Ascending aorta (tissue), 2 donors: ENCODE measurements at regions of chr5 and their contacts with region 1.

Region 1: DNA sequence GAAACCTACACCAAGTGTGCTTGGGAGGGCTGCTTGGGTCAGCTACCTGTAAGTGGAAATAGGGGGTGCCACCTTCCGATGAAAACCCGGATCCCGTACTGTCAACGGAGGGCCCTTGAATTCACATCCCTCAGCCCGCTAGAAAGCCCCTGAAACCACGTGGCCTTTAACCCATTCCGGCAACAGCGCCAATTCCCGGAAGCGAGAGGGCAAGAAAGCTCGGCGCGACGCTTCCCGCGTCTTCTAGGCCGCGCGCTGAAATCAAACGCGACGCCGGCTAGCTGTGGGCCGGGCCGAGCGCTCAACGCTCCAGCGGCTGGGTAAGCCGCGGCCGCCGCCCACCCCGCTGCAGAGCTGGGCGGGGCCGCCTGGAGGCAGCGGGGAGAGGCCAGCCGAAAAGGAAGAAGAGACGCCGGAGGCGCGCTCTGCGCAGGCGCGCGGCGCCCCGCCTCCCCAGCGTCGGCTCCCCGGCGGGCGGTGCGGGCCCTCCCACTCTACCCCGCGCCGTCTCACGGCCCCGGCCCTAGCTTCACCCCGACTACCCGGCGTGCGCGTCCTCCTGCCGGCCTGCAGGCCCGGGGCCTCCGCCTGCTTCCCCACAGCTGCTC is at the start of gene KIF2A:
- DNase-seq: peak; percentile 63 to 95
- H3K4me3 ChIP-seq: peak within 1 kb of the TSS; percentile 93 to 98
- H3K27ac ChIP-seq: peak within 1 kb of the TSS; percentile 79 to 94
- H3K4me1 ChIP-seq: peaks cover 3 to 4% of the 10 kb centered on the region in 2 donors
- H3K27me3 ChIP-seq: no peaks in the 10 kb centered on the region
- CTCF ChIP-seq: no peak
- total RNA-seq, gene KIF2A: 19.8 TPM

Region 2: GRCh38 chr5:62354028-62354874 is 48.4 kb after region 1 on chr5:
- intact Hi-C with region 1: loop called (anchors 5 kb)
- DNase-seq: no peak
- H3K4me3 ChIP-seq: no peak overlapping the region
- H3K27ac ChIP-seq: no peak overlapping the region
- H3K4me1 ChIP-seq: no peaks in the 10 kb centered on the region
- H3K27me3 ChIP-seq: no peaks in the 10 kb centered on the region
- CTCF ChIP-seq: peak; percentile 40 to 69 (median 48)

Region 3: DNA sequence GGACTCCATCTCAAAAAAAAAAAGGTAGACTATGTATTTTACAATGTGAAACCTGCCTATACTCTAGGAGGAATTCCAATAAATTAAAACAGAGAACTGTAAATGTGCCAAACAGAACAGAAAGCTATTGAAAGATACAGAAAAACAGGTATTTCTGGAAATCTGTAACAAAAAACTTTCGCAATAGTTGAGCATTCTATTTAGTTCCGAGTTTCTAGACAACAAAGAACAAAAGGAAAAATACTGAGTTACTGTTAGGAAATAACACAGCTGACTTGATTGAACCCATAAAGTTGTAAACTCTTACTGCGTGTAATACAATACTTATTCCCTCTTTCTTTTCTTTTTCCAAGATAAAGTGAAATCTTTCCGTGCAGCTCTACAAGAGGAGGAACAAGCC is 79.3 kb after region 1 on chr5:
- intact Hi-C with region 1: no loop called
- DNase-seq: no peak
- H3K4me3 ChIP-seq: no peak overlapping the region
- H3K27ac ChIP-seq: no peak overlapping the region
- H3K4me1 ChIP-seq: no peaks in the 10 kb centered on the region
- H3K27me3 ChIP-seq: no peaks in the 10 kb centered on the region
- CTCF ChIP-seq: no peak

Region 4: DNA sequence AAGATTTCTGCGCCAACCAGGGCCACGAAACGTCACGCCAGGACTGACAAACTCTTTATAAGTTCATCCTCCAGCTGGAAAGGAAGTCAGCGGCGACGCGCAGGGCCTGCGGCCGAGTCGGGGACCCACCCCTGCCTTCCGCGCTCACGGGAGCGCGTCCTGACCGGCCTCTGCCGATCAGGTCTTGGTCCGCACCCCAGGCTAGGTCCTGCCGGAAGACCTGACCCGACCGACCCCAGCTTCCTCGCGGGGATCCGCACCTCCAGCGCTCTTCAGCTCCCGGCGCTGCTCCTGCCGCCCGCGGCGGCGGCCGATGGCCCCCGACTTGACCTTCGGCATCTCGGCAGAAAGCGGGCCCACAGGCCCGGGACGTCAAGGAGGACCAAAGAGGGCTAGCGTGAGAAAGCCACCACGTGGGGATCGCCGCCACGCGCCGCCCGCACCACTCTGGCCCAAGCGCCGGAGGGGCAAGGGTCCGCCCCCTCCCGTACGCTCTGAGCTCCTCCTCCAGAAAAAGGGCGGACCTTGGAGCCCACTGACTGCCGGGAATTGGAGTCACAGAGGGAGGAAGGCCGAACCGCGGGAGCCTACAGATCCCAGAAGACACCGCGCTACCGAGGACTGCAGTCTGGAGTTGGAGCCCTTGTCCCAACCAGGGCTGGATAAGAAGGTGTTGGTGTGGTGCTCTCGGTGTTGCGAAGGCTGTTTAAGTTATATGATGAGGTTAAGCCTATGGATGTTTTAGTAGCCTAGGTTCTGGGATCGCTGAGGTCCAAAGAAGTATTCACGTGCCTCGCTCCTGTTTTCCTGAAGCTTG is 97.8 kb after region 1 on chr5 and contains the start of gene DIMT1:
- intact Hi-C with region 1: loop called (anchors 1 kb)
- DNase-seq: peak; percentile 92 to 98
- H3K4me3 ChIP-seq: peak within 1 kb of the TSS; percentile 87 to 100
- H3K27ac ChIP-seq: peak within 1 kb of the TSS; percentile 96 to 98
- H3K4me1 ChIP-seq: peaks cover 4 to 13% of the 10 kb centered on the region in 2 donors
- H3K27me3 ChIP-seq: no peaks in the 10 kb centered on the region
- CTCF ChIP-seq: no peak
- total RNA-seq, gene DIMT1: 8.6 TPM

Region 5: DNA sequence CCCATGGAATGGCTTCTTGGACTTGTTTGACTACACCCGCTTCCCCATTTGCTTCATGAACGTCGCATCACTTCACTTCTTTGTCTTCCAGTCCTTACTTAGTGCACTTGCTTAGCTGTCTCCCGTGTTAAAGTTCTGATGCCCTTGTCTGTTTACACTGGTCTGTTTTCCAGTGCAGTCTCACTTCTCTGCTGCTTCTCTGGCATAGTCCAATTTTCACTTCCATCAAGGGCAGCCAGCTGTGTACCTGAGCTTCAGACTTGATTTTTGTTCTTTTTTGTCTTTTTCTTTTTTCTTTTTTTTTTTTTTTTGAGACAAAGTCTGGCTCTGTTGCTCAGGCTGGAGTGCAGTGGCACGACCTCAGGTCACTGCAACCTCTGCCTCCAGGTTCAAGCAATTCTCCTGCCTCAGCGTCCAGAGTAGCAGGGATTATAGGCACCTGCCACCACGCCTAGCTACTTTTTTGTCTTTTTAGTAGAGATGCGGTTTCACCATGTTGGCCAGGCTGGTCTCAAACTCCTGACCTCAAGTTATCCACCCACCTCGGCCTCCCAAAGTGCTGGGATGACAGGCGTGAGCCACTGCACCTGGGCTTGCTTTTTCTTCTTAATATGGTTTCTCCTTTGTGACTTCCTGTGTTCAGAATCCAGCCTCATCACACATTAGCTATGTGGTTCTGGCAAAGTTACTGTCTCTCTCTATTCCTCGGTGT is 348.2 kb after region 1 on chr5:
- intact Hi-C with region 1: no loop called
- DNase-seq: no peak
- H3K4me3 ChIP-seq: no peak overlapping the region
- H3K27ac ChIP-seq: no peak overlapping the region
- H3K4me1 ChIP-seq: no peaks in the 10 kb centered on the region
- H3K27me3 ChIP-seq: no peaks in the 10 kb centered on the region
- CTCF ChIP-seq: no peak